Psoas muscle (tissue), 8 donors: ENCODE measurements at regions of chr1 and their contacts with region 1.

Region 1: GRCh38 chr1:188070848-188071247 is 1242.1 kb downstream of the PLA2G4A start:
- DNase-seq: no peak
- ATAC-seq: no peak
- H3K4me3 ChIP-seq: no peak overlapping the region
- H3K27ac ChIP-seq: no peak overlapping the region
- H3K4me1 ChIP-seq: no peaks in the 10 kb centered on the region
- H3K27me3 ChIP-seq: peaks cover 0 to 3% (median 0%) of the 10 kb centered on the region in 3 donors
- CTCF ChIP-seq: no peak

Region 2: DNA sequence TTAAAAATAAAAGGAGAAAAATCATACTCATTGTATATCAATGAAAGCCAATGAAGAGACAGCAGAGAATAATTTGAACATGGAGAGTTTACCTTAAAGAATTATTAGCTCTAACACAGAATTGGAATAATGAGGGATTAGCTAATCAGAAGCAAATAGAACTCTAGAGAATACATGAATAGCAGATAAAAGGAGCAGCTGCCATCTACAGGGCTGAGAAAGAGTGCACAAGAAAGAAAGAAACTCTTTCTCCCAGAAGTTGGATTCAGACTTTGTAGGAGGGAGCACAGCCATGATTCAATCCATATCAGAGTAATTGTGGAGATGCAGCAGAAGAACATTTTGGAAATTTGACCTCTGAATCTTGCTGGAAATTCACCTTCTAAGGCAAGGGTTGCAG is 70.9 kb before region 1 on chr1:
- intact Hi-C with region 1: no loop called
- DNase-seq: no peak
- ATAC-seq: no peak
- H3K4me3 ChIP-seq: no peak overlapping the region
- H3K27ac ChIP-seq: no peak overlapping the region
- H3K4me1 ChIP-seq: no peaks in the 10 kb centered on the region
- H3K27me3 ChIP-seq: no peaks in the 10 kb centered on the region
- CTCF ChIP-seq: no peak

Region 3: DNA sequence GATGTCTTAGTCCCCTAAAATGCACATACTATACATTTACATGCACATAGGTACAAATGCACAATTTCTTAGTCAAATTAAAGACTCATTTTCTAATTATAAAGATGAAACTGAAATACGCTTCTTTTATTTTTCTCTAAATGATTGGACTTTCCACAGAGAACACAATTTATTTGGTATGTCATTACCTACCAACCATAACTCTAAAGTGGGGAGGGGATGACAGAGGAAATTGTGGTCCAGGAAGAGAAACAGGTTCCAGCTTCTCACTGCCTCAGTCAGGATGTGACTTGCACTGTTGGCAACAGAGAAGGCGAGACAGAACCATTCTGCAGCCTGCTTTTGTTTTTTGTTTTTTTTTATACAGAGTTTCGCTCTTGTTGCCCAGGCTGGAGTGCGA is 52.9 kb before region 1 on chr1:
- intact Hi-C with region 1: no loop called
- DNase-seq: no peak
- ATAC-seq: no peak
- H3K4me3 ChIP-seq: no peak overlapping the region
- H3K27ac ChIP-seq: no peak overlapping the region
- H3K4me1 ChIP-seq: no peaks in the 10 kb centered on the region
- H3K27me3 ChIP-seq: no peaks in the 10 kb centered on the region
- CTCF ChIP-seq: no peak

Region 4: GRCh38 chr1:188122646-188123045 is 51.8 kb after region 1 on chr1:
- intact Hi-C with region 1: loop called in 1 of 2 experiments (anchors 1 kb)
- DNase-seq: no peak
- ATAC-seq: no peak
- H3K4me3 ChIP-seq: no peak overlapping the region
- H3K27ac ChIP-seq: no peak overlapping the region
- H3K4me1 ChIP-seq: no peaks in the 10 kb centered on the region
- H3K27me3 ChIP-seq: no peaks in the 10 kb centered on the region
- CTCF ChIP-seq: no peak